ENCODE measurements at regions of chr10 and their contacts with region 1.

Region 1: GRCh38 chr10:7767209-7767608 is 20.6 kb downstream of the KIN start:
- DNase-seq: no peak
- H3K4me3 ChIP-seq: no peak overlapping the region
- H3K27ac ChIP-seq: no peak overlapping the region
- H3K4me1 ChIP-seq: peaks cover 14 to 43% (median 30%) of the 10 kb centered on the region in 4 experiments
- H3K27me3 ChIP-seq: no peaks in the 10 kb centered on the region

Region 2: DNA sequence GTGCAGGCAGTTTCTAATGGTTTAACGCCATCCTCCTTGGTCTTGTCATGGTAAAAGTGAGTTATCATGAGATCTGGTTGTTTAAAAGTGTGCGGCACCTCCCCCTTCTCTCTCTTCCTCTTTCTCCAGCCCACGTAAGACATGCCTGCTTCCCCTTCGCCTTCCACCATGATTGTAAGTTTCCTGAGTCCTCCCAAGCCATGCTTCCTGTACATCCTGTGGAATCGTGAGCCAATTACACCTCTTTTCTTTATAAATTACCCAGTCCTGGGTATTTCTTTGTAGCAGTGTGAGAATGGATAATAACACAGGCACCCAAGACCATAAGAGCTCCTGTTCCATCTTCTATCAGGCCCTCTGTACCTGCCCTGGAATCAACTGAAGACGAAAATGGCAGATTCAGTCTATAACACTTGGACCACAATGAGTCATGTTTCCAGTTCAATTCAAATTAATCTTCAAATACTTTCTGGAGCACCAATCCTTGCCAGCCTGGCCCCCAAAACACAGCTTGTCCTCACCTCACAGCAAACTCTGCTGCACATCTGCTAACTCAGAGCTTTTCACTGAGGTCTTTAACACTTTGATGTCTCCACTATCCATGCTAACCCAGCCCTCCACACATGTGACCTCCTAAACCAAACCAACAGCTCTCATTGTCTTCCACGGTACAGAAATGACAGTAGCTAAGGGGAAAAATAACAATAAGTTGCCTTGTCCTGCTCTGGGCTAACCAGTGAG is 429.6 kb before region 1 on chr10:
- CTCF ChIA-PET with region 1: no interaction called
- POLR2A ChIA-PET with region 1: no interaction called
- DNase-seq: peak; percentile 17 to 85 (median 77)
- H3K4me3 ChIP-seq: peak overlapping the region in 2 of 7 experiments; percentile 1 to 20
- H3K27ac ChIP-seq: no peak overlapping the region
- H3K4me1 ChIP-seq: peaks cover 0 to 15% (median 12%) of the 10 kb centered on the region in 4 experiments
- H3K27me3 ChIP-seq: no peaks in the 10 kb centered on the region

Region 3: GRCh38 chr10:7756360-7756992 is 10.7 kb before region 1 on chr10:
- CTCF ChIA-PET with region 1: interaction called, 15 read pairs
- POLR2A ChIA-PET with region 1: no interaction called
- DNase-seq: peak; percentile 59 to 74 (median 70)
- H3K4me3 ChIP-seq: no peak overlapping the region
- H3K27ac ChIP-seq: no peak overlapping the region
- H3K4me1 ChIP-seq: peaks cover 0 to 2% (median 0%) of the 10 kb centered on the region in 4 experiments
- H3K27me3 ChIP-seq: no peaks in the 10 kb centered on the region